A673 (cell line): ENCODE measurements at regions of chr2 and their contacts with region 1.

Region 1: GRCh38 chr2:14494759-14495158 is 137.8 kb upstream of the LRATD1 start:
- DNase-seq: no peak
- H3K4me3 ChIP-seq: no peak overlapping the region
- H3K27ac ChIP-seq: no peak overlapping the region
- H3K4me1 ChIP-seq: no peaks in the 10 kb centered on the region
- H3K27me3 ChIP-seq: no peaks in the 10 kb centered on the region
- CTCF ChIP-seq: no peak

Region 2: DNA sequence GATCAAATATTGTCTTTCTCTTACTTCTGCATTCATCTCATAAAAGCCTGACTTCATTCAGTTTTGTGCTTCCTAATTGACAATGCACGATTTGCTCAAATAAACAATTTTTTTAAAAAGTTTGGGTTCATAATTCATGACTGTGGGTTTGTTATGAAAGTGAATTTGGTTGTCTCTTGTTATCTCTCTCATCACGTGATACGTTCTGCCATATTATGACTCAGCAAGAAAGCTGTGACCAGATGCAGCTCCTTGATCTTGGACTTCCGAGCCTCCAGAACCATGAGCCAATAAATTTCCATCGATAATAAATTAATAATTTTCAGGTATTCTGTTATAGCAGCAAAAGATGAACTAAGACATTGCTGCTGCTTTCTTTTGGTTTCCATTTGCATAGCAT is 18.8 kb before region 1 on chr2:
- CTCF ChIA-PET with region 1: no interaction called
- POLR2A ChIA-PET with region 1: no interaction called
- intact Hi-C with region 1: loop called (anchors 2 kb)
- DNase-seq: no peak
- H3K4me3 ChIP-seq: no peak overlapping the region
- H3K27ac ChIP-seq: no peak overlapping the region
- H3K4me1 ChIP-seq: no peaks in the 10 kb centered on the region
- H3K27me3 ChIP-seq: no peaks in the 10 kb centered on the region
- CTCF ChIP-seq: no peak